ENCODE measurements at regions of chr10 and their contacts with region 1.

Region 1: DNA sequence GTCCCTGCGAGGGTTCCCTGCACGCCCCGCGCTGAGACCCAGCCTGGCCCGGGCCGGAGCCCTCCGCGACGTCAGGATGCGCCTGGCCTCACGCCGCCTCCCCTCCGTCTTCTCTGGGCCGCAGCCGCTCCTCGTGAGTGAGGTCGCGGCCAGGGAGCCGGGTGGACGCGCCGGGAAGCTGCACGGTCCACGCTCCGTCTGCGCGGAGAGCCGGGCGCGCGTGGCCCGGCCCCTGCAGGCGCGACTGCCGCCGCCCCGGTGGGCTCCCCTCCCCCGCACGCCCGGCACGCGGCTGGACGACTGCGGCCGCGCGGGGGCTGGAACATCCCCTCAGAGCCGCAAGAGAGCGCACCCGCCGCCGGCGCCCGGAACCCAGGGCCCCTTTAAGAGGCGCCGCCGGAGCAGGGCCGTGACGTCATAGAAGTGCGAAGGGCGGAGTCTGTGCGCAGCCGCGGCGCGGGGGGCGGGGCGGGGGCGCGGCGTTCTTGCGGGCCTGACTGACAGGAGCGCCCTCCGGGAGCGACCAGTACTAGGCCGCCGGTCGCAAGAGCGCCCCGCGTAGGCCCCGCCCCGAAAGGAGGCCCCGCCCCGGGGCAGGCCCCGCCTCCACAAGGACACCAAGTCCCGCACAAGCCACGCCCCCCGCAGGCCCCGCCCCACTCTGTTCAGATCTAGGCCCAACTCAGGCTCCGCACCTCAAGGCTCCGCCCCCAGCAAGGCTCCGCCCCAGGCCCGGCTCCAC is 445 bp upstream of the INPP5A start:
- DNase-seq: peak; percentile 100
- ATAC-seq: peak; percentile 89 to 95 (median 91)
- H3K4me3 ChIP-seq: peak overlapping the region; percentile 75
- H3K27ac ChIP-seq: peak overlapping the region; percentile 80
- H3K4me1 ChIP-seq: peaks cover 50% of the 10 kb centered on the region
- H3K27me3 ChIP-seq: no peaks in the 10 kb centered on the region
- CTCF ChIP-seq: peak; percentile 31

Region 2: GRCh38 chr10:132281915-132282666 is 255.1 kb before region 1 on chr10:
- intact Hi-C with region 1: no loop called
- DNase-seq: peak in 1 of 2 donors; percentile 16
- ATAC-seq: peak; percentile 40 to 75 (median 43)
- H3K4me3 ChIP-seq: no peak overlapping the region
- H3K27ac ChIP-seq: no peak overlapping the region
- H3K4me1 ChIP-seq: peaks cover 8% of the 10 kb centered on the region
- H3K27me3 ChIP-seq: peaks cover 0 to 40% (median 13%) of the 10 kb centered on the region in 3 donors
- CTCF ChIP-seq: no peak

Region 3: DNA sequence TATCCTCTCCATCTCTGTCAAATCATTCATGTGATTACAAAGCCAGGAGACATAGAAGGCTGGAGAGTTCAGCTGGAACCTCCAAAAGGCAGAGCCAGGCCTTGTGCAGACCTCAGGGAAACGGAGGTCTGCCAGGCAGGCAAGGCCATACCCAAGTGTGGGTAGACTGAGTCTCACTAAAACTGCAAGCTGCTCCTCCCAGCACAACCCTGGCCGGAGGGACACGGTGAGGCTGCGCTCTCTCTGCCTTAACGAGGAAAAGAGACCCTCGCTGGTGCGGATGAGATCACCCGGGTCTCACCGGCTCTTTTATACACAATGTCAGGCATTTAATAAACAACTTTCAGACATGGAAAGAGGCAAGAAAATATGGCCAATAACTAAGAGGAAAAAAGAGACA is 65.7 kb before region 1 on chr10:
- intact Hi-C with region 1: no loop called
- DNase-seq: no peak
- ATAC-seq: no peak
- H3K4me3 ChIP-seq: no peak overlapping the region
- H3K27ac ChIP-seq: no peak overlapping the region
- H3K4me1 ChIP-seq: peaks cover 6% of the 10 kb centered on the region
- H3K27me3 ChIP-seq: no peaks in the 10 kb centered on the region
- CTCF ChIP-seq: no peak

Region 4: DNA sequence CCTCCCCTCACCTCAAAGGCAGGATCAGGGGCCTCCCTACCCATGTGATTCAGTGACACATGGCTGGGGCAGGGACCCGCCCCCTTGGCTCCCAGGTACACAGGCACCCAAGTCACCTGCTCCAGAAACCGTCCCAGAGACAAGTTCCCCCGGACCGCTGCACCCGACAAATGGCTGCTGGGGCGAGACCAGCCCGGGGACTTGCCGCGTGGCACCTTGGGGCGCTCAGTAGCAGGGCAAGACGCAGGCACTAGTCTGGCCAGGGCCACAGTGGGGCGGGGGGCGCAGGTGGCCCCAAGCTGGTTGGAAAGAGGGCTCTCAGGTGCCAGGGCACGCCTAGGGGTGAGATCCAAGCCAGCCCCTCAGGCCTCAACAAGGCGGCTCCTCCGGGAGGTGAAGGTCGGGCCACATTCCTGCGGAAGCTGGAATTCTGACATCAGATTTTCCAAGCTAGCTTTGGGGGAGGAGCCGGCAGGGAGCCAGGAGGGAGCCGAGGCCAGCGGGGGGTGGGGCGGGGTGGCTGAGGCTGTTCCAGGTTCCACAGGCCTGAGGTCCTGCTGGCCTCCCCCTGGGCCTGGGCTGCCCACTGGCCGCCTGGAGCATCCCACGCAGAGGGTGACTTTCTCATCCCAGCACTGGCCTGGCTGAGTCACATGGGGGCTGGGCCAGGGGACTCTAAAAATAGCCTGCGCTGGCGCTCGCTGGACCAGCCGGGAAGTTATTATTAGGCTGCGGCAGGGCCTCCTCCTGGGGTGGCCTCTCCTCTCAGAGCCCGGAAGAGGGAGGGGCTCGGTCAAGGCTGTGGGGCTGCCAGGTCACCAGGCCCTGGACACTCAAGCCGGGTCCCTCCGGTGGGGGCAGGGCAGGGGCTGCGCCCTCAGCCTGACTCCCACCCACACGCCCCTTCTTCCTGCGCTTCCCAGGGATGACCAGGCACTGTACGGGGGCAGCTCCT is 20.1 kb before region 1 on chr10:
- intact Hi-C with region 1: loop called (anchors 2 kb)
- DNase-seq: peak; percentile 94 to 97
- ATAC-seq: peak; percentile 90 to 96 (median 92)
- H3K4me3 ChIP-seq: peak overlapping the region; percentile 53
- H3K27ac ChIP-seq: peak overlapping the region; percentile 89
- H3K4me1 ChIP-seq: peaks cover 47% of the 10 kb centered on the region
- H3K27me3 ChIP-seq: no peaks in the 10 kb centered on the region
- CTCF ChIP-seq: no peak